Natural killer cell (primary cell): ENCODE measurements at regions of chr17 and their contacts with region 1.

Region 1: DNA sequence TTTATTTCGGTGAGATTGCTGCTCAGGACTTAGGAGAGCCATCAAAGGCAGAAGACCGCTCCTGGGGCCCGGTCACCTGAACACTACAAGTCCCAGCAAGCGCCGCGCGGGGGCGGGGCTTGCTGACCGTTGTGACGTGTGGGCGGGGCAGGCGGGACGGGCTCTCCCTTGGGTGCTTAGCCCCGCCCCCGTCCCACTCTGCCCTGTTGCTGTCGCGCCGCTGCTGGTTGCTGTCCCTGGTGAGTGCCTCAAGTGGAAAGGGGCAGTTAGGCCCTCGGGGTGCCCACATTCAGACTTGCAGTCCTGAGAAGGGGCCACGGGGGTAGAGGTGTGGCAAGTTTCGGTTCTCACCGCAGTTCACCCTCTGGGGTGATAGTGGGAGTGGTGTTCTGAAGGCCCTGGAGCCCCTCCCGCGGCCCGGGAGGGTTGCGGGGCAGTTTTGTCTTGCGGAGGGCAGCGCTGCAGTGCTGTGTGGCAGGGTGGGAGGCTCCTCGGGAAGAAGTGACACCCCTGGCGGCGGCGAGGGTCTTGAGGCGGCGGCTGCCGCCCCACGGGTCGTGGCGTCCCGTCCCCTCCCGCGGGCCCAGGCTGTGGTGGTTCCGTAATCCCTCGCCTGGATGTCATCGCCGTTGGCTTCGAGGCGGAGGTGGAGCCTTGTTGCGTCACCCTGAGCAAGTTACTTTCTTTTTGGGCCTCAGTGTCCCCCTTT is at the start of gene CALCOCO2:
- DNase-seq: peak; percentile 87 to 94
- ATAC-seq: peak; percentile 93 to 97 (median 95)
- H3K4me3 ChIP-seq: peak within 1 kb of the TSS; percentile 84
- H3K4me3 Mint-ChIP-seq: peak within 1 kb of the TSS; percentile 92
- H3K27ac ChIP-seq: peak within 1 kb of the TSS; percentile 98
- H3K27ac Mint-ChIP-seq: peak within 1 kb of the TSS; percentile 90 to 97
- H3K4me1 ChIP-seq: peaks cover 38% of the 10 kb centered on the region
- H3K4me1 Mint-ChIP-seq: peaks cover 27 to 49% of the 10 kb centered on the region in 2 donors
- H3K27me3 ChIP-seq: no peaks in the 10 kb centered on the region
- H3K27me3 Mint-ChIP-seq: peaks cover 0 to 2% of the 10 kb centered on the region in 2 donors
- CTCF ChIP-seq: no peak
- total RNA-seq, gene CALCOCO2: 175 to 188 (median 179) TPM

Region 2: GRCh38 chr17:48816774-48817590 is 14.0 kb before region 1 on chr17 and contains the start of gene TTLL6:
- intact Hi-C with region 1: loop called (anchors 2 kb)
- DNase-seq: peak; percentile 66 to 88
- ATAC-seq: peak; percentile 96 to 97 (median 97)
- H3K4me3 ChIP-seq: peak within 1 kb of the TSS; percentile 3
- H3K4me3 Mint-ChIP-seq: peak within 1 kb of the TSS; percentile 61
- H3K27ac ChIP-seq: no peak within 1 kb of the TSS
- H3K27ac Mint-ChIP-seq: peak within 1 kb of the TSS in 1 of 2 donors; percentile 53
- H3K4me1 ChIP-seq: peaks cover 16% of the 10 kb centered on the region
- H3K4me1 Mint-ChIP-seq: peaks cover 10% of the 10 kb centered on the region in 2 donors
- H3K27me3 ChIP-seq: peaks cover 8% of the 10 kb centered on the region
- H3K27me3 Mint-ChIP-seq: peaks cover 20 to 25% of the 10 kb centered on the region in 2 donors
- CTCF ChIP-seq: no peak
- total RNA-seq, gene TTLL6: not detected

Region 3: GRCh38 chr17:48841395-48841831 is 10.4 kb after region 1 on chr17:
- intact Hi-C with region 1: loop called (anchors 1 kb)
- DNase-seq: peak in 1 of 2 donors; percentile 78
- ATAC-seq: peak; percentile 88 to 94 (median 91)
- H3K4me3 ChIP-seq: peak overlapping the region; percentile 7
- H3K4me3 Mint-ChIP-seq: peak overlapping the region; percentile 87
- H3K27ac ChIP-seq: peak overlapping the region; percentile 77
- H3K27ac Mint-ChIP-seq: peak overlapping the region; percentile 90 to 92
- H3K4me1 ChIP-seq: peaks cover 48% of the 10 kb centered on the region
- H3K4me1 Mint-ChIP-seq: peaks cover 38 to 42% of the 10 kb centered on the region in 2 donors
- H3K27me3 ChIP-seq: no peaks in the 10 kb centered on the region
- H3K27me3 Mint-ChIP-seq: no peaks in the 10 kb centered on the region
- CTCF ChIP-seq: no peak